Gastrocnemius medialis (tissue), 4 donors: ENCODE measurements at regions of chr6 and their contacts with region 1.

Region 1: GRCh38 chr6:127471379-127472255 is 12.4 kb upstream of the KIAA0408 start:
- DNase-seq: no peak
- ATAC-seq: no peak
- H3K4me3 ChIP-seq: no peak overlapping the region
- H3K27ac ChIP-seq: no peak overlapping the region
- H3K4me1 ChIP-seq: no peaks in the 10 kb centered on the region
- H3K27me3 ChIP-seq: no peaks in the 10 kb centered on the region
- CTCF ChIP-seq: no peak
- POLR2A ChIP-seq: no peak

Region 2: DNA sequence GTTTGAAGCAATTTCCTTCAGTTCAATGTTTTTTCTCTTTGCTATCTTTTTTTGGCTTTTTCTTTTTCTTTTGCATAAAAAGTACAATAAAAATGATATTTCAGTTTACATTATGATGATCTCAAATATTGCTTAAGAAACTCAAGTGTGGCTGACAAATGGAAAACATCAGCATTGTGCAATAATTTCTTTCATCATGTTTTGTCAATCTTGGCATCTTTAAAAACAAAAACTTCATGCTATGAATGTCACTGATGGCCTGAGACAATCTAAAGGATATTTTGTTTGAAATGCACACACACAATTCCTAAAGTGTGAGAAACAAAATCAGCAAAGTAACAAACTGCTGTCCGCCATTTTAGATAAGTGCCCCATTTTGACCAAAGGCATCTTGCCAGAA is 61.4 kb after region 1 on chr6:
- in situ Hi-C with region 1: loop called in 2 of 4 experiments (anchors 5 kb)
- intact Hi-C with region 1: no loop called
- DNase-seq: no peak
- ATAC-seq: no peak
- H3K4me3 ChIP-seq: no peak overlapping the region
- H3K27ac ChIP-seq: no peak overlapping the region
- H3K4me1 ChIP-seq: no peaks in the 10 kb centered on the region
- H3K27me3 ChIP-seq: no peaks in the 10 kb centered on the region
- CTCF ChIP-seq: no peak
- POLR2A ChIP-seq: no peak

Region 3: DNA sequence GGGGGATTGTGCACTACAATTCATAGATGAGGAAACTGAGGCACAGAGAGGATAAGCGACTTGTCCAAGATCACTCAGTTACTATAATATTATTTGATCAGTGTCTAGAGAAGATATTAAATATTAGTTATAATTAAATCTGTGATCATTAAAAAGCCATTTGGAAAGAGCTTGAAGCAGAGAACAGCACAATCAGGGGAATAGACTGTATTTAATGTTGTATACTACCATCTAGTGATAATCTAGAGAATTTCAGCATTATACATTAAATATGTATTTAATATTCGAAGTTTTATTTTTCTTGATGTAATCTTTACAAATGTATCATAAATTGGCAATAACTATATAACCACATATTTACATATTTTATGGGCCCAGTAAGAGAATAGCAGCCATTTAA is 67.7 kb after region 1 on chr6:
- in situ Hi-C with region 1: loop called in 3 of 4 experiments (anchors 5 to 10 kb)
- intact Hi-C with region 1: no loop called
- DNase-seq: no peak
- ATAC-seq: peak; percentile 39 to 60
- H3K4me3 ChIP-seq: no peak overlapping the region
- H3K27ac ChIP-seq: no peak overlapping the region
- H3K4me1 ChIP-seq: no peaks in the 10 kb centered on the region
- H3K27me3 ChIP-seq: no peaks in the 10 kb centered on the region
- CTCF ChIP-seq: peak in 4 of 5 experiments; percentile 34 to 51 (median 40)
- POLR2A ChIP-seq: no peak